GM18951 (cell line): ENCODE measurements at regions of chr6 and their contacts with region 1.

Region 1: DNA sequence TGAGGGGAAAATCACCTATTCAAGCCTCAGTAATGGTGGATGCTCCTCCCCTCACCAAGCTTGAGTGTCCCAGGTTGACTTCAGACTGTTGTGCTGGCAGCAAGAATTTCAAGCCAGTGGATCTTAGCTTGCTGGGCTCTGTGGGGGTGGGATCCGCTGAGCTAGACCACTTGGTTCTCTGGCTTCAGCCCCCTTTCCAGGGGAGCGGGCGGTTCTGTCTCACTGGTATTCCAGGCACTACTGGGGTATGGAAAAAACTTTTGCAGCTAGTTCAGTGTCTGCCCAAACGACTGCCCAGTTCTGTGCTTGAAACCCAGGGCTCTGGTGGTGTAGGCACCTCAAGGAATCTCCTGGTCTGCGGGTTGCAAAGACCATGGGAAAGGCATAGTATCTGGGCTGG is 42.9 kb upstream of the UFL1 start:
- POLR2A ChIP-seq: no peak

Region 2: DNA sequence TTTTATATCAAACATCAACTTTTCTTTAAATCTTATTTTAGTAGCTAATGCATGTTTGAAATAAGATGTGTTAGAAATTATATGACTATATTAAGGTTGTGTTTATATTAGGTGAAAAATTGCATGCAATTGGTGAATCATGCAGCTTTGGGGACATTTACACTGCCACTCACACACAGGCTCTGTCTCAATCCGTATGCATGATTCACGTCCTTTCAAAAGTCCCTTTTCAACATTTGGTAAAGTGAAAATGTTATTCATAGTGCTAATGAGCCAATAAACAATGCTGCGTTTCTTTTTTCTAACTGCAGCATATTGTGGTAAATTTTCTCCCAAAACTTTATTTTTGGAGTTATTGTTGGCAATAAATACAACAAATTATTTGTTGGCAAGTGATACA is 264.9 kb before region 1 on chr6:
- in situ Hi-C with region 1: no loop called
- POLR2A ChIP-seq: no peak

Region 3: GRCh38 chr6:96381232-96381631 is 97.5 kb before region 1 on chr6:
- in situ Hi-C with region 1: loop called (anchors 10 kb)
- POLR2A ChIP-seq: no peak

Region 4: GRCh38 chr6:96809119-96809518 is 330.4 kb after region 1 on chr6:
- in situ Hi-C with region 1: no loop called
- POLR2A ChIP-seq: no peak